Psoas muscle (tissue), 8 donors: ENCODE measurements at regions of chr4 and their contacts with region 1.

Region 1: GRCh38 chr4:169612871-169613859 is 782 bp upstream of the NEK1 start:
- DNase-seq: peak; percentile 71 to 76
- ATAC-seq: peak; percentile 64 to 83 (median 69)
- H3K4me3 ChIP-seq: peak overlapping the region; percentile 84
- H3K27ac ChIP-seq: peak overlapping the region; percentile 88
- H3K4me1 ChIP-seq: peaks cover 17% of the 10 kb centered on the region
- H3K27me3 ChIP-seq: no peaks in the 10 kb centered on the region
- CTCF ChIP-seq: peak; percentile 72

Region 2: GRCh38 chr4:169492438-169493163 is 120.6 kb before region 1 on chr4:
- intact Hi-C with region 1: no loop called
- DNase-seq: peak in 1 of 2 donors; percentile 35
- ATAC-seq: peak in 3 of 4 donors; percentile 53 to 60 (median 55)
- H3K4me3 ChIP-seq: no peak overlapping the region
- H3K27ac ChIP-seq: no peak overlapping the region
- H3K4me1 ChIP-seq: no peaks in the 10 kb centered on the region
- H3K27me3 ChIP-seq: no peaks in the 10 kb centered on the region
- CTCF ChIP-seq: peak; percentile 49

Region 3: DNA sequence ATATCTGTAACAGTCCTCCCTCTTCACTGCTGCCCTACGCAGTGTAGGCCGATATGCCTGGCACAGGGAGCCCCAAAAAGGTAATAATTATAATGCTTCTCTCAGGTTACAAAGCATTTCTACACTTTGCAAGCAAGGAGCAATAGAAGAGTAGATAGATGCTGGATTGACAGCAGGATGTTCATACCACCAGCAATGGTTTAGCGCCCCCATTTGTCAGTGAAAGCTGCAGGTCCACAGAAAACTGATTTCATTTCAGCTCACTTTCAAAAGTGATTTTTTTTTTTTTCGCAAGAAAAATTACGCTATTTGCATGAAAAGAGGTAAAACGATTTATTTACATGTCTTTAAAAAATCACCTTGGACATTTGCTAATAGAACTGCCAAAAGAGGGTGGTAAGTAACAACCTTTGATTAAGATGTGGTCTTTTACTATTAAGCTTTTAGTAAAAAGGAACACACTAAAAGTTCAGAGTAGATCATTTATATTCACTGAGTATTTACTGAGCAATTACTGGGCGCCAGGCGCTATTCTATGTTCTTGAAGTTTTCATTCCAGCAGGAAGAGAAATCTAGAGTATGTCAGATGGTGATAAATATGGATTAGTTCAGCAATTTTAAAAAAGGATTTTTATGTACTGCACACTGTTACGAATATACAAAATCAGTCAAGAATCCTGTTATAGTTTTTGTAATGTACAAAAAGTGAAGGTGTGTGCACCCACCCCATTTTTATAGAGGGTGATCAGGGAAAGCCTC is 110.2 kb after region 1 on chr4:
- intact Hi-C with region 1: loop called (anchors 5 kb)
- DNase-seq: no peak
- ATAC-seq: peak in 1 of 4 donors; percentile 47
- H3K4me3 ChIP-seq: no peak overlapping the region
- H3K27ac ChIP-seq: no peak overlapping the region
- H3K4me1 ChIP-seq: no peaks in the 10 kb centered on the region
- H3K27me3 ChIP-seq: no peaks in the 10 kb centered on the region
- CTCF ChIP-seq: no peak